HCT116 (cell line): ENCODE measurements at regions of chr12 and their contacts with region 1.

Region 1: DNA sequence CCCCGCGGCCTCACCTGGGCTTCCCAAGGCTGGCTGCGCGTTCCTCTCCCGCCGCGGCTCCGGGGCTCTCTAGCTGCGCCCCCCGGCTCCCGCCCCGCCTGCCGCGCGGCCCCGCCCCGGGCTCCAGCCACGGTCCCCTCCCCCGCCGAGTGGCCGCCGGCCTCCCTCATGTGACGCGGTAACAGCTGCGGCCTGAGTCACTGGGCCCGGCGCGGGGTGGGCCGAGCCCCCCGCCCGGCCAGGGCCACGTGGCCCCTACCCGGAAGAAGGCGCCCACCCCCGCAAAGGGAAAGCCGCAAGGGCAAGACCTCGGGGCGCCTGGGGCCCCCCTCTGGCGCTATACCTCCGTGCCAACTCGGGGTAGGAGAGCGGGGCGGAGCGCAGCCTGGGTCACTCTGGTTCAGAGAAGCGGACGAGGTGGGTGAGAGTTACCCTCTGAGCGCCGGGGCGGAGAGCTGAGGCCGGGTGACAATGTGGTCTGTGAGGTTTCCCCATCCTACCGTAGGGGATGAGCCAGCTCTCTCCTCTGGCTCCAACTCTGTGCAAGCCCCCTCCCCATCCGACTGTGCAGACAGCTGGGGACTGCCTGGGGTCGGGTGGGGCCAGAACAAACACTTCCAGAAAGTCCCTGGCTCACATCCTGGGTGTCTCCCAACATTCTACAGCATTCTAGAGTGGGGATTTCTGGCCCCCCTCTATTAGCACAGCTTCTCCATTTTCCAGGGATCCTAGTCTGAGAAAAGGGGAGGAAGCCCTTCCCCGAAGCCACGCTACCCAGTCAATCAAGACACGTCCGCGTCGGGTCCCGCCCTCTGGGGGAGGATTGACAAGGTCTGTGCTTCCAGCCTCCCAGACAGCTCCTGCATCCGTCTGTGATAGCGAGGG is at the start of gene CD63:
- DNase-seq: peak; percentile 68
- ATAC-seq: peak; percentile 83
- H3K4me3 ChIP-seq: peak within 1 kb of the TSS; percentile 88 to 96
- H3K27ac ChIP-seq: peak within 1 kb of the TSS; percentile 94
- H3K4me1 ChIP-seq: peaks cover 19 to 55% of the 10 kb centered on the region in 2 experiments
- H3K27me3 ChIP-seq: no peaks in the 10 kb centered on the region
- CTCF ChIP-seq: no peak
- POLR2A ChIP-seq: no peak
- RAD21 ChIP-seq: no peak
- total RNA-seq, gene CD63: 355 TPM

Region 2: DNA sequence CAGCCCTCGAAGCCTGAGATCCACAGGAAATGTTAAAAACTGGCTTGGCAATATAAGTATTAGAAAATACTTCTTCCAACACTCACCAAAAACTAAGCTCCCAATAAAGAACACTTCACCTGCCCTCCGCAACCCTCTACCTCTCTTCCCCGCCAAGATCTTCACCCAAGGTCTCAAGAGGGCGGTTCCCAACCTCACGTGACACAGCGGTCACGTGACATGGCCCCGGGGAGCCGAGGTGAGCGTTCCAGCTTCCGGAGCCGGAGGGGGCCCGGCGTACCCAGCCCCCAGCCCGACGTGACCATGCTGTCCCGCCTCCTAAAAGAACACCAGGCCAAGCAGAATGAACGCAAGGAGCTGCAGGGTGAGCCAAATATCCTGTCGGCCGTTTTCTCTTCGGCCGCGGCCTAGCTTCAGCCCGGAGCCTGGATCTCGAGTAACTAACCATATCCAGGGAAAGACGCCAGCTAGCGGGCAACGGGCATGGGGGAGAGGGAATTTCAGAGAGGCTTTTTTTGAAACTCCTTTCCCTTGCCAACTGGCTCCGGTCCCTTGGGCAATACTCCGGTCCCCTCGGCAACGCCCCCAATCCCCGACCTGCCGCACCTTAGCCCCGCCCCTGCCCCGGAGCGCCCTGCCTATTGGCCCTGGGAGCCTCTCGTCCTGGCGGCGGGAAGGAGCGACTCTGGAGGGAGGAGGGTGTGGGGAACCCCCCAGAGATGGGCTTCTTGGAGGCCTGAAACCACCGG is 13.2 kb before region 1 on chr12 and contains the start of gene BLOC1S1:
- CTCF ChIA-PET with region 1: interaction called, 14 read pairs
- POLR2A ChIA-PET with region 1: interaction called, 5 read pairs
- RAD21 ChIA-PET with region 1: interaction called in 1 of 2 experiments, 4 read pairs
- intact Hi-C with region 1: no loop called
- DNase-seq: peak; percentile 94
- ATAC-seq: peak; percentile 90
- H3K4me3 ChIP-seq: peak within 1 kb of the TSS; percentile 75 to 94
- H3K27ac ChIP-seq: peak within 1 kb of the TSS; percentile 84
- H3K4me1 ChIP-seq: peaks cover 27 to 48% of the 10 kb centered on the region in 2 experiments
- H3K27me3 ChIP-seq: peaks cover 11% of the 10 kb centered on the region; the same call in 1 of the 2 replicates
- CTCF ChIP-seq: no peak
- POLR2A ChIP-seq: peak; percentile 49
- RAD21 ChIP-seq: no peak
- total RNA-seq, gene BLOC1S1: 85.5 TPM

Region 3: DNA sequence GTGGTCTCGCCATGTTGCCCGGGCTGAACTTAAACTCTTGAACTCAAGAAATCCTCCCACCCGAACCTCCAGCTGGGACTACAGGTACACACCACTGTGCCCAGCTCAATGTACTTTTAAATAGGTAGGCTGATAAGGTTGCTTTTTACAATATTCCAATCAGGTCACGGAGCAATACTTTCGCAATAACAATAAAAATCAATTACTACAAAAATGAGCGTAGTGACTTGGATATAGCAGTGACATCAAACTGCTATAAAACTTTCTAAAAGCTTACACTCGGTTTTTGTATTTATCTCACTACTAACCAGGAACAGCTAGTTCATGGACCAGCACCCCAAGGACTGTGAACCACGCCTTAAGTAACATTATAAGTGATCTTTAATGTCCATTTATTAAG is 77.8 kb after region 1 on chr12:
- CTCF ChIA-PET with region 1: no interaction called
- POLR2A ChIA-PET with region 1: no interaction called
- RAD21 ChIA-PET with region 1: no interaction called
- intact Hi-C with region 1: no loop called
- DNase-seq: no peak
- ATAC-seq: no peak
- H3K4me3 ChIP-seq: no peak overlapping the region
- H3K27ac ChIP-seq: no peak overlapping the region
- H3K4me1 ChIP-seq: peaks cover 12 to 24% of the 10 kb centered on the region in 2 experiments
- H3K27me3 ChIP-seq: no peaks in the 10 kb centered on the region
- CTCF ChIP-seq: no peak
- POLR2A ChIP-seq: no peak
- RAD21 ChIP-seq: no peak